Sigmoid colon (tissue), 7 donors: ENCODE measurements at regions of chr10 and their contacts with region 1.

Region 1: DNA sequence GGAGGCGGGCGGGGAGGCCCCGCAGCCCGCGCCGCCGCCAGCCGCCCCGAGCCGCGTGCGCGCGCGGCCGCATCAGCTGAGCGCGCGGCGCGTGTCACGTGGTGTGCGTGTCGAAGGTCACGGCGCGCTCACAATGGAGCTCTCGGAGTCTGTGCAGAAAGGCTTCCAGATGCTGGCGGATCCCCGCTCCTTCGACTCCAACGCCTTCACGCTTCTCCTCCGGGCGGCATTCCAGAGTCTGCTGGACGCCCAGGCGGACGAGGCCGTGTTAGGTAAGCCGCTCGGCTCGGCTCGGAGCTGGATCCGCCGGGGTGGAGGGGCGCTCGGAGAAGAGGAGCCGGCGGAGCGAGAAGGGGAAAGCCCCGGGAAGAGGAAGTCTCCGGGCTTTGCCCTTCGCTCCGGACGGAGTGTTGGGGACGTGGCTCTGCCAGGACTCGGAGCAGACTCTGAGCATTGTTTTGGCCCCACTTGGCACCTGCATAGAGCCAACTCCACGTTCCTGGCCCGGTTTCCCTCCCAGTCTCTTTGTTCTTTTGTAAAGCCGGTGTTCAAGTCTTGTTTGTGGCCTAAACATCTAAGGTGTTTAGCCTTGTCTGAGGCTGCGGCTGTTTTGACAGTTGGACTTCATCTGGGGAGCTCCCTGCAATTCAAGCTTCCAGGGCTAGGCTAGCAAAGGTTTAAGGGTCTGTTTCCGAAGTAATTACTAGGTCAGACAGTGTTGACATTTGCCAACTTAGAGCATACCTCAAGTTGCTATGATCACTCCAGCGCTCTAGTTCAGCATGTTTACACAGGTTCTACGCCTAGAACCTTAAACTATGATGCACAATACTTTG is at the start of gene COMMD3:
- DNase-seq: peak; percentile 96
- H3K4me3 ChIP-seq: peak within 1 kb of the TSS; percentile 69 to 87 (median 78)
- H3K27ac ChIP-seq: peak within 1 kb of the TSS; percentile 94 to 96 (median 96)
- H3K4me1 ChIP-seq: peaks cover 0 to 38% (median 24%) of the 10 kb centered on the region in 4 donors
- H3K27me3 ChIP-seq: no peaks in the 10 kb centered on the region
- CTCF ChIP-seq: no peak
- EP300 ChIP-seq: no peak
- POLR2A ChIP-seq: peak; percentile 52 to 66
- total RNA-seq, gene COMMD3: 45.3 to 80.1 (median 61.6) TPM

Region 2: DNA sequence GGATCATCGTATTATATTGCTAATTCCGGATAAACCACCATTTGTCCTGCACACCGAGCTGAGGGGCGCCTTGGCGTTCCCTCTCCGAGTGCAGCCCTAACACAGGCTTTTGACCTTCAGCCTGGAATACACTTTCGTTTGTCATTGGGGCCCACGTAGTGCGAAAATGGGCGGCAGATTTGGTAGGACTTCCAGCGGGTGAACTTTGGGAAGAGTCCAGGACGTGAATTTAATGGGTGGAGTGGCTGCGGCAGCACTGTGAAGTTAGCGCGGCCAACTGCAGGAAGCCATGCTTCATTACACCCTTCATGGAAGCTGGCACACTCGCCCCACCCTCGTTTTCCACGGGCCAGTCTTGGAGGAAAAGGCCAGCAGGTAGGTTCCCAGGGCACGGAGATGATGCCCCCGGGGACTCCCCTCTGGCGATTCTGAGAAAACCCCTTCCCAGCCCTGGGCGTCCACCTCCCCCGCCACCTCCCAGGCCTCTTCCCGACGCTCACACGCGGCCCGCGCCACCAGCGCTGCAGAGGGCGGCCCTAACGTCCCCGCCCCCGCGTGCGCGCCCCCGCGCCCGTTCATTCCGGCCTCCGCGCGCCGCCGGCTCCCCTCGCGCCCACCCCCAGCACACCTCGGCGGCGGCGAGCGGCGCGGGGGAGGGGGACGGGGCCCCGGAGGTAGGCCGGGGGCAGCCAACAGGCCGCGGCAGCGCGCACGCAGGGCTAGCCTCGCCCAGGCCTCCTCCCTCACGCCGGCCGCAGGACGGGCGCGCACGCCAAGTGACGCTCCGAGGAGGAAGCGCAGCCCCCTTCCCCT is 782.8 kb before region 1 on chr10 and contains the start of gene MLLT10:
- intact Hi-C with region 1: loop called (anchors 5 kb)
- DNase-seq: peak; percentile 97
- H3K4me3 ChIP-seq: peak within 1 kb of the TSS; percentile 66 to 93 (median 92)
- H3K27ac ChIP-seq: peak within 1 kb of the TSS; percentile 95 to 99 (median 97)
- H3K4me1 ChIP-seq: peaks cover 0 to 56% (median 26%) of the 10 kb centered on the region in 4 donors
- H3K27me3 ChIP-seq: no peaks in the 10 kb centered on the region
- CTCF ChIP-seq: peak in 3 of 4 experiments; percentile 38 to 69 (median 55)
- EP300 ChIP-seq: no peak
- POLR2A ChIP-seq: peak; percentile 59 to 76
- total RNA-seq, gene MLLT10: 36.0 to 53.7 (median 45.1) TPM

Region 3: DNA sequence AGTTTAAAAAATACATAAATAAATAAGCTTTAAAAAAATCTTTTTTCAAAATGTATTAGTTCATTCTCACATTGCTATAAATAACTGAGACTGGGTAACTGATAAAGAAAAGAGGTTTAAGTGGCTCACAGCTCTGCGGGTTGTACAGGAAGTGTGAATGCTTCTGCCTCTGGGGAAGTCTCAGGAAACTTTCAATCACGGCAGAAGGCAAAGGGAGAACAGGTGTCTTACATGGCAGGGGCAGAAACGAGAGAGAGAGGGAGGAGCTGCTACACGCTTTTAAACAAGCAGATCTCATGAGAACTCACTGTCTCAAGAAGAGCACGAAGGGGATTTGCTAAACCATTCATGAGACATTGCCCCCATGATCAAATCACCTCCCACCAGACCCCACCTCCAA is 427.5 kb before region 1 on chr10:
- intact Hi-C with region 1: no loop called
- DNase-seq: no peak
- H3K4me3 ChIP-seq: no peak overlapping the region
- H3K27ac ChIP-seq: no peak overlapping the region
- H3K4me1 ChIP-seq: no peaks in the 10 kb centered on the region
- H3K27me3 ChIP-seq: no peaks in the 10 kb centered on the region
- CTCF ChIP-seq: no peak
- EP300 ChIP-seq: no peak
- POLR2A ChIP-seq: no peak

Region 4: DNA sequence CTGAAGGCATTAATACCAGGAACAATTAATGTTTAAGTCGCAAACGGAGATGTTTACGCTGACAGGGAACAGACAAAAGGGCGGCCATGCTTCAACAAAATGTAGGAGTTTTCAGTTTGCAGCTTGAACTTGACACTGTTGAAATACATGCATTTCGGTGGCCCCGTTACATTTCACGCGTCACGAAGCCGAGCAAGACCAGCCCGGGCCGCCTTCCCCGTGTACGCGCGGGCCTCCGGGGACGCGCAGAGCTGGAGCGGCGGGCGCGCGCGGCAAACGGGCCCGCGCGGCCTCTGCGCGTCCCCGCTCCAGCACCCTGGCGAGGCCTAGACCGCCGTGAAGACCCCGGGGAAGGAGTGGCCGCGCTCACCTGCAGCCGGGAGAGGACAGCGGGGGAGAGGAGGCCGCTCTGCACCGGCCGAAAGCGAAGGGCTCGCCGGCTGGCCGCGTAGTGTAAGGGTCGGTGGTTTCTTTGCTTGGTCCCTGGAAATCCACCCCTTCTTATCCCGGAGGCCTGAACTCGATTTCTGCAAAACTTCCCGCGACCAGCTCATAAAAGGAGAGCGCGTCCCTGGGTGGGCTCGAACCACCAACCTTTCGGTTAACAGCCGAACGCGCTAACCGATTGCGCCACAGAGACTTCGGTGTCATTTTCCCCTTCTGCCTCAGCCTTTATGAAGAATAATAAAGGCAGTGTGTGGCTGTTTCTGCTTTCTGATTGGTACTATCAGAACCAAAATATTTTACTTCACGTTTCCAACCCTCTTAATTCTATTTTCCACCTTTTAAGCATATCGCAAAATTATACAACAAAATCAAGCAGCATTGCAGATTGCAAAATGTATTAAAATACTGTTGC is 87.3 kb before region 1 on chr10:
- intact Hi-C with region 1: loop called (anchors 1 kb)
- DNase-seq: peak; percentile 93
- H3K4me3 ChIP-seq: peak overlapping the region; percentile 60 to 79 (median 75)
- H3K27ac ChIP-seq: peak overlapping the region; percentile 93 to 96 (median 96)
- H3K4me1 ChIP-seq: peaks cover 0 to 12% (median 7%) of the 10 kb centered on the region in 4 donors
- H3K27me3 ChIP-seq: no peaks in the 10 kb centered on the region
- CTCF ChIP-seq: no peak
- EP300 ChIP-seq: no peak
- POLR2A ChIP-seq: no peak

Region 5: DNA sequence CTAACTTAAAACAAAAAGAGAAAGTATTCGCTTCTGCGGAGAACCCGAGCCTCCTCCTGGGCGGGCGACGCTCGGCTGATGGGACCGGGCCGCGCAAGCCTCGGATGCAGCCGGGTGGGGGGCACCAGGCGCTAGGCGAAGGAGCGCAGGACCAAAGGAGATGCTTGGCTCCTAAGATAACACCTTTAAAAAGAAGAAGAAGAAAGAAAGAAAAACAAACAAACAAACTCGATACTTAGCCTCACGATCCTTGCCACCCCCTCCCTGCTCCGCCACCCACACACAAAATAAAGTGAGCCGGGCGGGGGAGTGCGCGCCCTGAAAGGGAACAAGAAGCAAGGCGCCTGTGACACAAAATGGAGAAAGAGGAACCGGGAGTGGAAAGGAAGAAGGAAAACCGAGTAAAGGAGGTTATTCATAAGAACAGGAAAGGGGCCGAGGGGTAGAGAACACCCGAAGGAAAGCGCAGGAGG is 64.7 kb before region 1 on chr10:
- intact Hi-C with region 1: loop called (anchors 2 kb)
- DNase-seq: peak; percentile 79
- H3K4me3 ChIP-seq: peak overlapping the region; percentile 61 to 86 (median 74)
- H3K27ac ChIP-seq: peak overlapping the region; percentile 94 to 97 (median 96)
- H3K4me1 ChIP-seq: peaks cover 0 to 10% (median 5%) of the 10 kb centered on the region in 4 donors
- H3K27me3 ChIP-seq: no peaks in the 10 kb centered on the region
- CTCF ChIP-seq: no peak
- EP300 ChIP-seq: no peak
- POLR2A ChIP-seq: no peak

Region 6: DNA sequence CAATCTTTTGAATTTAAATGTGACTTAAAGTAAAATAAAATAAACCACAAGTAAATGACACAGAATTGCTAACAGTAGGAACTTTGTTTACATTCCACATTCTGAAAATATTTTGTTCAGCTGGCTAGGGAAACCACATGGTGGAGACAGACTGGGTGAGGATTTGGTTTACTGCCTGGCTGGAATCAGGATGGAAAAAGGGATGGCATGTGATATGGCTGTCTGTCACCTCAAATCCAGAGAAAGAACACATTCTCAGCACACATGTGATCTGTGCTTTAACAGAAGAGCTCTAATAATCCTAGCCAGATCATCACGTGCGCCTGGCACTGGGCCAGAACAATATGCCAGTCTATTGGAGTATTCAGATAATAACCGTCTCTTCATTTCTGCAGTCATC is 488.8 kb after region 1 on chr10:
- intact Hi-C with region 1: no loop called
- DNase-seq: no peak
- H3K4me3 ChIP-seq: no peak overlapping the region
- H3K27ac ChIP-seq: no peak overlapping the region
- H3K4me1 ChIP-seq: peaks cover 0 to 39% (median 25%) of the 10 kb centered on the region in 4 donors
- H3K27me3 ChIP-seq: no peaks in the 10 kb centered on the region
- CTCF ChIP-seq: no peak
- EP300 ChIP-seq: no peak
- POLR2A ChIP-seq: no peak

Region 7: DNA sequence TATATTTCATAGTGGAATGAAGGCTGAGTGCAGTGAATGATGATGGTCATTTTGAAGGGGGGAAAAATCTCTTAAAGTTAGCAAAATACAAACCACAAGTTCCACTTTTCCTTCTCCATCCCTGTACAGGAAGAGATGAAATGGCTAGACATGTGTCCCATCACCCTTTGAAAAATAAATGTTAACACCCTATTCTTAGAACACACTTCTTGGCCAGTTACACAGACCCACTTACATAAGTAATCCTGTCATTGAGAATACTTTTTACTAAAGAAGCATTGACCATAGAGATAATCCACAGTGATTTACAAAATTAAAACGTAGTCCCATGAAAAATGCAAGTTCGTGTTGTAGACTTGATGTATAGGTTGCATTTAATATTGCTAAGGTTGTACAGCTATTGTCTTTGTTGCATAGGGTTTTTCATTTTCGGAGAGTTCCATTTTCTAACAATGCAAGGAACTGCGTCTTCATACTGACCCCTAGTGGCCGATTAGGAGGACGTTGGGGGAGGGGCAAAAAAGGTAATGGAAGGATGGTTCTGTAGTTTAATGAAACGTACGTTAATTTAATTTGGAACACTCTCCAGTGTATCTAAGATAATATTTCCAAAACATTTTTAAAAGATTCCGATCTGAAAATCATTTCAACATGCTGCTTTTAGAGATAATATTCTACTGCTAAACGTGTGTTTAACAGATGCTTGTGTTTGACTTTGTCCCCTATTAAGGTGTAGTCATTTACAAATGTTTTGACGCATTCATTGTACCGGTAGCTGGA is 672.3 kb after region 1 on chr10:
- intact Hi-C with region 1: loop called (anchors 5 kb)
- DNase-seq: peak; percentile 73
- H3K4me3 ChIP-seq: no peak overlapping the region
- H3K27ac ChIP-seq: no peak overlapping the region
- H3K4me1 ChIP-seq: peaks cover 0 to 11% (median 4%) of the 10 kb centered on the region in 4 donors
- H3K27me3 ChIP-seq: no peaks in the 10 kb centered on the region
- CTCF ChIP-seq: peak; percentile 78 to 89 (median 85)
- EP300 ChIP-seq: no peak
- POLR2A ChIP-seq: no peak